Colonic mucosa (tissue), 4 donors: ENCODE measurements at regions of chr5 and their contacts with region 1.

Region 1: DNA sequence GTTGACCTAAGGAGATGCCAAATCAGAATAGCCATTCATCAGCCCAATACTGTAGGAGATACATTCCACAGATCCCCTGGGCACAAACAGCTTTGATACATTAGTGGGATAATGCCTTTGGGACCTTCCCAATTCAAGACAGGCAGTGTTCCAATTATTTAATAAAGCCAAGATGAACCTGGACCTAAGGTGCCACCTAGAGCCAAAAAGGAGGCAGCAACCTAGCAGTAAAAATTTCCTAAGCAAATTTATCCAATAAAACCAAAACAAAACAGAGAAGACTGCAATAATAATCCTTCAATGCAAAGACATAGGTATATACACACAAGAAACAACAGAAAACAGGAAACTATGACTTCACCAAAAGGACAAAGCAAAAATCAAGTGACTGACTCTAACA is 253.0 kb downstream of the HINT1 start:
- DNase-seq: no peak
- H3K4me3 ChIP-seq: no peak overlapping the region
- H3K27ac ChIP-seq: no peak overlapping the region
- H3K4me1 ChIP-seq: no peaks in the 10 kb centered on the region
- H3K27me3 ChIP-seq: no peaks in the 10 kb centered on the region
- CTCF ChIP-seq: peak; percentile 30

Region 2: DNA sequence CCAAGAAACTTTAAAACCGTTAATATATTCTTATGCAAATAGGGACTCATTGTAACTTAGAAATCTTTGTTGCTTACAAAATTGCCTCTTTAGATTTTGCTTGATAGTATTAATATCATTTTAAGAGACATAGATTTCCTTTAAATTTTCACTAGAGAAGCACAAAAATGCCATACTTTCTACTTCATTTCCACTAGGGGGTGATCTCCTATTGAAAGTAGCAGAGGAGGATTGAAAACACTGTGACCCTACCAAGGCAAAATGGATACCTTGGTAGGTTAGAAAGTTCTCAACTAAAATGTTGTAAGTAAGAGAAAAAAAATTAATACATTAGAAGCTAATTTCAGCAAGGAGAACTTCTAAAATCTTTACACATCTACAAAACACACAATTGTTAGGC is 802.9 kb before region 1 on chr5:
- intact Hi-C with region 1: loop called (anchors 5 kb)
- DNase-seq: no peak
- H3K4me3 ChIP-seq: no peak overlapping the region
- H3K27ac ChIP-seq: no peak overlapping the region
- H3K4me1 ChIP-seq: no peaks in the 10 kb centered on the region
- H3K27me3 ChIP-seq: no peaks in the 10 kb centered on the region
- CTCF ChIP-seq: no peak